ENCODE measurements at regions of chr2 and their contacts with region 1.

Region 1: GRCh38 chr2:191521608-191522208 is 156.2 kb upstream of the NABP1 start:
- DNase-seq: peak; percentile 3 to 24 (median 12)
- ATAC-seq: no peak
- H3K4me3 ChIP-seq: no peak overlapping the region
- H3K27ac ChIP-seq: no peak overlapping the region
- H3K4me1 ChIP-seq: no peaks in the 10 kb centered on the region
- H3K27me3 ChIP-seq: no peaks in the 10 kb centered on the region
- CTCF ChIP-seq: peak; percentile 17 to 69 (median 21); a peak in 3 of 6 replicates
- EP300 ChIP-seq: no peak
- POLR2A ChIP-seq: no peak
- RAD21 ChIP-seq: peak; percentile 69 to 86

Region 2: DNA sequence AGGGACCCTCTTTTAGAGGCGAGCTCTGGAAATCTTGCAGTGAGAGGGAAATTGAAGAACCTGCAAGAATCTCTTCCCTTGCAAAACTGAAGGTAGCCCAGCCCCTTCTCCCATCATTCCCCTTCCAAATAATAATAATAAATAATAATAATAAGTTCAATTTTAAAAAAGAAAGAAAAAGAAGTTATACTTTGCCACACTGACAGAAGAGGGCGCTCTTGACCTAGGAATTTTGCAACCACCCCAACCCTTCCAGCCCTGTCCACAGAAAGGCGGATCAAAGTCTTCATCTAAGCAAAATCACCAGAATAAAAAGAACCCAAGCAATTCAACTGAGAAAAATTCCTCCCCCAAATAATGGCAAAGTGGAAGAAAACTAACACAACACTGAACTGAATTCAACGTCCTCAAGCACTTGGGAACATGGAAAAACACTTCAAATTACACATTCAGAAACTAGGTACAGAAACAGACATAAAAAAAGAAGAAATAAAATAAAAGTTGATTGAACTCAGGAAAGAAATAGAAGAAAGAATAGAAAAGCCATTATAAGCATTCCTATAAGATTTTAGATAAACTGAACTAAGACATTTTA is 740.0 kb before region 1 on chr2:
- CTCF ChIA-PET with region 1: no interaction called
- POLR2A ChIA-PET with region 1: no interaction called
- in situ Hi-C with region 1: no loop called
- intact Hi-C with region 1: loop called (anchors 2 kb)
- DNase-seq: peak; percentile 52 to 63 (median 56)
- ATAC-seq: peak; percentile 87
- H3K4me3 ChIP-seq: no peak overlapping the region
- H3K27ac ChIP-seq: no peak overlapping the region
- H3K4me1 ChIP-seq: no peaks in the 10 kb centered on the region; a peak in 1 of 5 replicates
- H3K27me3 ChIP-seq: no peaks in the 10 kb centered on the region
- CTCF ChIP-seq: peak; percentile 34 to 71 (median 52); a peak in 5 of 6 replicates
- EP300 ChIP-seq: no peak
- POLR2A ChIP-seq: no peak
- RAD21 ChIP-seq: peak; percentile 64 to 79

Region 3: GRCh38 chr2:191051825-191052778 is 469.6 kb before region 1 on chr2:
- CTCF ChIA-PET with region 1: no interaction called
- POLR2A ChIA-PET with region 1: no interaction called
- in situ Hi-C with region 1: no loop called
- intact Hi-C with region 1: loop called (anchors 1 kb)
- DNase-seq: peak; percentile 14 to 43 (median 19)
- ATAC-seq: peak; percentile 76
- H3K4me3 ChIP-seq: no peak overlapping the region
- H3K27ac ChIP-seq: no peak overlapping the region
- H3K4me1 ChIP-seq: no peaks in the 10 kb centered on the region
- H3K27me3 ChIP-seq: peaks cover 0 to 2% of the 10 kb centered on the region in 2 experiments; a peak in 2 of 5 replicates
- CTCF ChIP-seq: peak; percentile 42 to 72 (median 43); a peak in 4 of 6 replicates
- EP300 ChIP-seq: no peak
- POLR2A ChIP-seq: no peak
- RAD21 ChIP-seq: peak; percentile 63 to 67

Region 4: GRCh38 chr2:191165176-191165643 is 356.5 kb before region 1 on chr2:
- CTCF ChIA-PET with region 1: interaction called, 4 read pairs
- POLR2A ChIA-PET with region 1: no interaction called
- in situ Hi-C with region 1: no loop called
- intact Hi-C with region 1: loop called (anchors 2 kb)
- DNase-seq: peak; percentile 5 to 20 (median 10)
- ATAC-seq: peak; percentile 71; the same call in 2 of the 3 replicates
- H3K4me3 ChIP-seq: no peak overlapping the region
- H3K27ac ChIP-seq: no peak overlapping the region
- H3K4me1 ChIP-seq: no peaks in the 10 kb centered on the region
- H3K27me3 ChIP-seq: peaks cover 0 to 4% of the 10 kb centered on the region in 2 experiments; a peak in 1 of 5 replicates
- CTCF ChIP-seq: peak; percentile 21 to 56 (median 36); a peak in 3 of 6 replicates
- EP300 ChIP-seq: no peak
- POLR2A ChIP-seq: no peak
- RAD21 ChIP-seq: peak; percentile 23 to 26; a peak in 3 of 4 replicates

Region 5: GRCh38 chr2:191218292-191218898 is 303.3 kb before region 1 on chr2:
- CTCF ChIA-PET with region 1: interaction called, 3 read pairs
- POLR2A ChIA-PET with region 1: no interaction called
- in situ Hi-C with region 1: loop called (anchors 25 kb)
- intact Hi-C with region 1: loop called (anchors 2 kb)
- DNase-seq: peak; percentile 13 to 47 (median 16)
- ATAC-seq: peak; percentile 86
- H3K4me3 ChIP-seq: no peak overlapping the region
- H3K27ac ChIP-seq: no peak overlapping the region
- H3K4me1 ChIP-seq: no peaks in the 10 kb centered on the region
- H3K27me3 ChIP-seq: no peaks in the 10 kb centered on the region
- CTCF ChIP-seq: peak; percentile 46 to 54 (median 53); a peak in 5 of 6 replicates
- EP300 ChIP-seq: no peak
- POLR2A ChIP-seq: no peak
- RAD21 ChIP-seq: peak; percentile 44 to 59

Region 6: GRCh38 chr2:191231995-191232394 is 289.7 kb before region 1 on chr2:
- CTCF ChIA-PET with region 1: no interaction called
- POLR2A ChIA-PET with region 1: no interaction called
- in situ Hi-C with region 1: no loop called
- intact Hi-C with region 1: loop called (anchors 5 kb)
- DNase-seq: peak in 1 of 4 experiments; percentile 2
- ATAC-seq: no peak
- H3K4me3 ChIP-seq: no peak overlapping the region
- H3K27ac ChIP-seq: no peak overlapping the region
- H3K4me1 ChIP-seq: no peaks in the 10 kb centered on the region
- H3K27me3 ChIP-seq: no peaks in the 10 kb centered on the region
- CTCF ChIP-seq: peak in 2 of 3 experiments; percentile 7 to 48; a peak in 2 of 6 replicates
- EP300 ChIP-seq: no peak
- POLR2A ChIP-seq: no peak
- RAD21 ChIP-seq: peak; percentile 33 to 57

Region 7: GRCh38 chr2:191394043-191394442 is 127.7 kb before region 1 on chr2:
- CTCF ChIA-PET with region 1: no interaction called
- POLR2A ChIA-PET with region 1: no interaction called
- in situ Hi-C with region 1: no loop called
- intact Hi-C with region 1: loop called (anchors 2 kb)
- DNase-seq: no peak
- ATAC-seq: no peak
- H3K4me3 ChIP-seq: no peak overlapping the region
- H3K27ac ChIP-seq: no peak overlapping the region
- H3K4me1 ChIP-seq: no peaks in the 10 kb centered on the region
- H3K27me3 ChIP-seq: peaks cover 0 to 4% of the 10 kb centered on the region in 2 experiments; a peak in 1 of 5 replicates
- CTCF ChIP-seq: no peak
- EP300 ChIP-seq: no peak
- POLR2A ChIP-seq: no peak
- RAD21 ChIP-seq: no peak

Measured in K562 (cell line).